ENCODE measurements at regions of chr1 and their contacts with region 1.

Region 1: DNA sequence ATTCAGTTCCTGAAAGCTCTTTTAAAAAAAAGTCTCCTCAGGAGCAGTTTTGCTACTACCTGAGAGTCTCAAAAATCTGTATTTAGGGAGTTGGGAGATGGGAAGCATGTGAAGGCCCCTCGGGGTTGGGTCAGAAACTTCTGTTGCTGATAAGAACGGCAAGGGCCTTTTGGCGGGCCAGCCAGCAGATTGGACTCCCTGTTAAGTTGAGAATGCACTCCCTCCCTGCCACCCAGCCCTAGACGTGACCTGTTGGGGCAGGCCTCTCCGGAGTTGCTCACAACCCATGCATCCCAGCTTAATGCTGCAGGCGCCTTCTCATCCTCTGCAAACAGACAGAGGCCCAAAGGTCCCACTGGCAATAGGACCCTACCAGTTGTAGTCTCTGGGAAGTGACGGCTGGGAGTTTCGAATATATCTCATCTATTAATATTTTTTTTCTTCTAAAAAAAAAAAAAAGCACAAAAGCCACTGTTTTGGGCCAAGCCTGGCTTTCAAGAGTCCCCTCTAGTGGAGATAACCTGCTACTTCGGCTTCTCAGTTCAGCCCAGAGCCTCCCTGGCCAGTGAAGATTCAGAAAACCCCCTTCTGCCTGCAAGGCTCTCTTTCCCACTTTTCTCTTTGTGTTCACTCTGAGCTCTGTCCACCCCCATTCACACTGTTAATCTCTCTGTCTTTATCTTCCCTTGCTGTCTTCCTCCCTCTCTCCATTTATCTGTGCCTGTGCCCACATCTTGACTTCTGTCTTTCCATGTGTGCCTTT is 5.3 kb downstream of the PLXNA2 start:
- DNase-seq: peak; percentile 42 to 58
- ATAC-seq: peak; percentile 48 to 78; a peak in 3 of 6 replicates
- H3K4me3 ChIP-seq: no peak overlapping the region
- H3K27ac ChIP-seq: peak overlapping the region; percentile 15 to 31; a peak in 2 of 6 replicates
- H3K4me1 ChIP-seq: peaks cover 23% of the 10 kb centered on the region
- CTCF ChIP-seq: peak; percentile 60
- EP300 ChIP-seq: no peak
- POLR2A ChIP-seq: no peak
- RAD21 ChIP-seq: peak; percentile 67 to 69

Region 2: DNA sequence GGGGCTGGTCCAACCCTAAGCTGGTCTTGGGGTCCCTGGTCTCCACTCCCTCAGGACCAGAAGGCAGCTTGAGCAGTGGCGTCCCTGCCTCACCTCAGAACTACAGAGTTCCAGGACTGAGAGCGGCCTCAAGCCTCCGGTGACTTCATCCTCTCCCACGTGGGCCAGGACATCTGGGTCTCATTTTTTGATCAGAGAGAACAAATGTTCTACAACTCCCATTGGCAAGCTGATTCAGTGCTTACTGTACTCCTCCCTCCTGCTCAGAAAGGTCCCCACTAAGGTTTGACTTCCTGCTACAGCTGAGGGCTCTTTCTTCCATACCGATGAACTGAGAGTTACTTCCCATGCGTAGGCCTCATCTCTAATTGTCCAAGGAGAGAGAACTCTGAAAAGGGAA is 73.2 kb before region 1 on chr1:
- CTCF ChIA-PET with region 1: interaction called, 11 read pairs
- POLR2A ChIA-PET with region 1: no interaction called
- DNase-seq: no peak
- ATAC-seq: no peak
- H3K4me3 ChIP-seq: no peak overlapping the region
- H3K27ac ChIP-seq: no peak overlapping the region
- H3K4me1 ChIP-seq: no peaks in the 10 kb centered on the region
- CTCF ChIP-seq: no peak
- EP300 ChIP-seq: no peak
- POLR2A ChIP-seq: no peak
- RAD21 ChIP-seq: no peak

Region 3: DNA sequence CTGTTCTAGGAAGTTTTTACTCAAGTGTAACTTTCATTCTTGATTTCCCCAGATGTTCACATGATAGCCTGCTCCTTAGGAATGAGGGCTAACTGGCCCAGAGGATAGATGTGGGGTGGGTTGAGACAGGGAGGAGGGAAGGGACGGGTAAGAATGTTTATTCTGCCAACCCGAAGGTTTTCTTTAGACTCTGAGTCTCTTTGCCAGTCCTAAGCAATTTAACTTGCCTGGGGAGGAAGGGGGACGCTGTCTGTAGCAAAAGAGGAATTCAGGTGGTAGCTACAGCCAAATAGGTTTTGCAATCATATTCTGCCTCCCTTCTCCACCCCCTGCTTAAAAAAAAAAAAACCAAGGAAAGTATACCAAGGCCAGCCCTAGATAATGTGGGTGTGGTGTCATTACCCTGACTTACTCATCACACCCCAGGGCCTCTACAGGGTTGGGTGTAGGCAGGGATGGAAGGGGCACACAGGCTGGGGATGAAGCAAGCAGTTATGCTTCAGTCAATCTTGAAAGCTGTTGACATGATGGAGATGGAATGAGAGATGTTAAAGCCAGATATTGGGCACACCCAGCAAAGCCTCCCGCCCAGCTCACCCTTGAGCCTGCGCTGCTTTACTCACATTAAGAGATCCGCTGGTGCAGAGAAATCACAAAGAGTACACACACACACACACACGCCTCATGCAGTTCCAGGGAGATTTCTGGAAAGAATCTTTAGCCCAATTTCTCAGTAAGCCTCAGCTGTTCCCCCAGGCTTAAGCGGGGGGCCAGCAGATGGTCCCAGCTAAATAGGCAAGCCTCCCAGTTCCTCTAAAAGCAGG is 54.6 kb before region 1 on chr1:
- CTCF ChIA-PET with region 1: interaction called, 26 read pairs
- POLR2A ChIA-PET with region 1: no interaction called
- DNase-seq: peak; percentile 92 to 95
- ATAC-seq: peak; percentile 96 to 98
- H3K4me3 ChIP-seq: no peak overlapping the region
- H3K27ac ChIP-seq: peak overlapping the region; percentile 66 to 81
- H3K4me1 ChIP-seq: peaks cover 60% of the 10 kb centered on the region
- CTCF ChIP-seq: no peak
- EP300 ChIP-seq: peak; percentile 69 to 79; a peak in 3 of 5 replicates
- POLR2A ChIP-seq: no peak
- RAD21 ChIP-seq: peak in 1 of 2 experiments; percentile 14; a peak in 3 of 5 replicates

Region 4: GRCh38 chr1:208207388-208208131 is 31.3 kb before region 1 on chr1:
- CTCF ChIA-PET with region 1: interaction called, 65 read pairs
- POLR2A ChIA-PET with region 1: no interaction called
- DNase-seq: no peak
- ATAC-seq: no peak
- H3K4me3 ChIP-seq: no peak overlapping the region
- H3K27ac ChIP-seq: no peak overlapping the region
- H3K4me1 ChIP-seq: peaks cover 23% of the 10 kb centered on the region
- CTCF ChIP-seq: no peak
- EP300 ChIP-seq: no peak
- POLR2A ChIP-seq: no peak
- RAD21 ChIP-seq: no peak

Region 5: GRCh38 chr1:208225954-208226937 is 12.6 kb before region 1 on chr1:
- CTCF ChIA-PET with region 1: interaction called, 32 read pairs
- POLR2A ChIA-PET with region 1: no interaction called
- DNase-seq: no peak
- ATAC-seq: no peak
- H3K4me3 ChIP-seq: no peak overlapping the region
- H3K27ac ChIP-seq: no peak overlapping the region
- H3K4me1 ChIP-seq: peaks cover 5% of the 10 kb centered on the region
- CTCF ChIP-seq: no peak
- EP300 ChIP-seq: no peak
- POLR2A ChIP-seq: no peak
- RAD21 ChIP-seq: no peak

Region 6: DNA sequence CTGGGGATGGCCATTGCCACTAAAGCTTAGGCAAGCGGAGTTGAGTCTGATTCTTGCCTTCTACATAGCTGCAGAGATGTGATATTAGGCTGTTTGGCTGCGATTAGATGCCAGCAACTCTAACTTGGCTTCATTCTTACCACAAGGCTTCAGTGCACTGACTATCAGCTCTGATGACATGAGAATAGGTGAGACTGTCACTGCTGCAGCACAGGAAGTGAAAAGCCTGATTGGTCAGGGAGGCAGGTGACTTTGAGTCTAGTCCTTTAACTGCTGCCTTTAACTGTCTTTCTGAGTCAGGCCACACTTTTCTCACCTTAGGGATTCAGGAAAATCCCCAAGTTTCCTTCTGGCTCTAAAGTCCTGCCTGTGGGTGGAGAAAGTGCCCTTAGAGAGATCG is 19.4 kb after region 1 on chr1:
- CTCF ChIA-PET with region 1: no interaction called
- POLR2A ChIA-PET with region 1: no interaction called
- DNase-seq: no peak
- ATAC-seq: no peak
- H3K4me3 ChIP-seq: no peak overlapping the region
- H3K27ac ChIP-seq: no peak overlapping the region
- H3K4me1 ChIP-seq: no peaks in the 10 kb centered on the region
- CTCF ChIP-seq: no peak
- EP300 ChIP-seq: no peak
- POLR2A ChIP-seq: no peak
- RAD21 ChIP-seq: no peak